Activated T-helper 1 cell treated with anti-CD3 and anti-CD28 coated beads, Interleukin-12 subunit alpha, Interleukin-12 subunit beta, Interleukin-2, Interleukin-4 antibody, amounts not matched to agents 30 ng/mL and 10 ng/mL and 1 ng/mL, durations not matched to agents 14 hours and 24 hours and 36 hours (primary cell): ENCODE measurements at regions of chr2 and their contacts with region 1.

Region 1: GRCh38 chr2:32627814-32628579 is at the start of gene TTC27:
- DNase-seq: peak; percentile 93
- H3K4me3 Mint-ChIP-seq: peak within 1 kb of the TSS; percentile 94
- H3K27ac Mint-ChIP-seq: peak within 1 kb of the TSS; percentile 91
- H3K4me1 Mint-ChIP-seq: peaks cover 26% of the 10 kb centered on the region
- H3K27me3 Mint-ChIP-seq: no peaks in the 10 kb centered on the region
- total RNA-seq, gene TTC27: 41.3 and 42.3 TPM in 2 replicates

Region 2: DNA sequence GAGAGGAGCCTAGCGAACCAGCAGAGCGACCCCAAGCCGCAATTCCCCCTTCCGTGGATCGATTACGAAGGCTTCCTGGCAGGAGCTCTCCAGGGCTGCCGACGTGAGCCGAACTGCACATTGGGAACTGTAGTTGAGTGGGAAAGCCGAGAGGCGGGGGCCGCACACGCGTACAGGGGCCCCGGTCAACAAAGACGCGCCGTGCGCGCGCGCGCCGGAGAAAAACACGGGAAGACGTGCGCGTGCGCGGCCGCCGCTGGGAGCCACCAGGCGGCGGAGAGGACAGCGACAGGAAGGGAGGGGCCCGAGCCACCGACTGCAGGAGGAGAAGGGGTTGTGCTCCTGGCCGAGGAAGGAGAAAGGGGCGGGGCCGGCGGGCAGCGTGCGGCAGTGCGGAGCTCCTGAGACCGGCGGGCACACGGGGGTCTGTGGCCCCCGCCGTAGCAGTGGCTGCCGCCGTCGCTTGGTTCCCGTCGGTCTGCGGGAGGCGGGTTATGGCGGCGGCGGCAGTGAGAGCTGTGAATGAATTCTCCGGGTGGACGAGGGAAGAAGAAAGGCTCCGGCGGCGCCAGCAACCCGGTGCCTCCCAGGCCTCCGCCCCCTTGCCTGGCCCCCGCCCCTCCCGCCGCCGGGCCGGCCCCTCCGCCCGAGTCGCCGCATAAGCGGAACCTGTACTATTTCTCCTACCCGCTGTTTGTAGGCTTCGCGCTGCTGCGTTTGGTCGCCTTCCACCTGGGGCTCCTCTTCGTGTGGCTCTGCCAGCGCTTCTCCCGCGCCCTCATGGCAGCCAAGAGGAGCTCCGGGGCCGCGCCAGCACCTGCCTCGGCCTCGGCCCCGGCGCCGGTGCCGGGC is 564.5 kb before region 1 on chr2 and contains the start of gene SPAST:
- intact Hi-C with region 1: loop called (anchors 1 kb)
- DNase-seq: peak; percentile 96
- H3K4me3 Mint-ChIP-seq: peak within 1 kb of the TSS; percentile 97
- H3K27ac Mint-ChIP-seq: peak within 1 kb of the TSS; percentile 95
- H3K4me1 Mint-ChIP-seq: peaks cover 31% of the 10 kb centered on the region
- H3K27me3 Mint-ChIP-seq: peaks cover 6% of the 10 kb centered on the region
- total RNA-seq, gene SPAST: 18.9 and 21.0 TPM in 2 replicates

Region 3: GRCh38 chr2:32356735-32357644 is 271.0 kb before region 1 on chr2 and contains the start of gene BIRC6:
- intact Hi-C with region 1: loop called (anchors 2 kb)
- DNase-seq: peak; percentile 92
- H3K4me3 Mint-ChIP-seq: peak within 1 kb of the TSS; percentile 89
- H3K27ac Mint-ChIP-seq: peak within 1 kb of the TSS; percentile 96
- H3K4me1 Mint-ChIP-seq: peaks cover 40% of the 10 kb centered on the region
- H3K27me3 Mint-ChIP-seq: no peaks in the 10 kb centered on the region
- total RNA-seq, gene BIRC6: 112 and 123 TPM in 2 replicates

Region 4: DNA sequence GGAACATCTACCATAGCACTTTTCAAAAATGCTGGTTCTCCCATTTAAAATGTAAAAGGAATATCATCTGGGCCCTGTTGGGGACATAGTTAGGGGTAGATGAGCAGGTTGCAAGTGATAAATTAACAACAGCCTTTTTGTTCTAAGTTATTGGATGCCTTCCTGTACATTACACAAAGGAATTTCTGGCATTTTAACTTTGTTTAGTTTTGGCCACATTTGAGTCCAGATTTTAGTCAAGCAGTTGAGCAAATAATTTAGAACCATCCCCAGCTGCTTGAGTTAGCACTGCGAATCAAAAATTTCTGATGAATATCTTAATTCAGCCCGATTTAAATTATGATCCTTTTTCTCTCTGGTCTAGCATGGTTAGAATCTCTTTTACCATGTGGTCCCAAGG is 124.2 kb after region 1 on chr2:
- intact Hi-C with region 1: loop called (anchors 5 kb)
- DNase-seq: no peak
- H3K4me3 Mint-ChIP-seq: no peak overlapping the region
- H3K27ac Mint-ChIP-seq: no peak overlapping the region
- H3K4me1 Mint-ChIP-seq: peaks cover 17% of the 10 kb centered on the region
- H3K27me3 Mint-ChIP-seq: no peaks in the 10 kb centered on the region

Region 5: GRCh38 chr2:33475224-33476130 is 847.5 kb after region 1 on chr2:
- intact Hi-C with region 1: loop called (anchors 5 kb)
- DNase-seq: peak; percentile 75
- H3K4me3 Mint-ChIP-seq: peak overlapping the region; percentile 92
- H3K27ac Mint-ChIP-seq: peak overlapping the region; percentile 99
- H3K4me1 Mint-ChIP-seq: peaks cover 41% of the 10 kb centered on the region
- H3K27me3 Mint-ChIP-seq: peaks cover 7% of the 10 kb centered on the region